Transverse colon (tissue), 4 donors: ENCODE measurements at regions of chr2 and their contacts with region 1.

Region 1: DNA sequence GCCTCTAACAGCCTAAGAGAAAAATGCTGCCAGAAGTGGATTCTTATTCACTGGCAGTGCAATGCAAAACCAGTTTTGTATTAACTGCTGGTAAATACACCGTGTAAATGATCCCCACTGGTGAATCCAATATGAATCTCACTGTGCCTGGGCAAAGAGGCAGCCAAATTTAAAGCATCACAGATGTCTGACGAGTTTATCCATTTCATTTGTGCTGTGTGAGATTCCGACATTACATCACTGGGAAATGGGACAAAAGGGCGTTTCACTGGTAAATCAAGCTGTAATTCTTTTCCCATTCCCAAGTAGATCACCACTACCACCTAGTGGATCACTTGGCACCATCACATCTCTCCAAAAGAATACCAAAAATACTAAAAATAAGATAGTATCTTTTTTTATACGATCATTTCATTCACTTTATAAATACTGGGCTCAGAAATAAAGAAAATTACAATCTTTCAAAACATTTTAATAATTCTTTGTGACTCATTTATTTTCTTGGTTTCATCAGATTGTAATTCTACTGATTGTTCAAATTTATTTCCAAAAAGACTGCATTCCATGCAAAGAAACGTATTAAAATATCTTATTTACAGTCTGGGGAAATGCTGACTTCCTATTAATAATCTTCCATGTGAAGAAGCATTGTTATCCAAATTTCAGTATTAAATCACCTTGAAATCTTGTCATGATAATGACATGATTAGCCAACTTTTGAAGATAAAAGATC is 125.6 kb downstream of the GRB14 start:
- DNase-seq: no peak
- H3K4me3 ChIP-seq: no peak overlapping the region
- H3K27ac ChIP-seq: no peak overlapping the region
- H3K4me1 ChIP-seq: peaks cover 0 to 3% (median 0%) of the 10 kb centered on the region in 4 donors
- H3K27me3 ChIP-seq: no peaks in the 10 kb centered on the region
- CTCF ChIP-seq: peak; percentile 29 to 48 (median 37)
- EP300 ChIP-seq: no peak
- POLR2A ChIP-seq: no peak

Region 2: DNA sequence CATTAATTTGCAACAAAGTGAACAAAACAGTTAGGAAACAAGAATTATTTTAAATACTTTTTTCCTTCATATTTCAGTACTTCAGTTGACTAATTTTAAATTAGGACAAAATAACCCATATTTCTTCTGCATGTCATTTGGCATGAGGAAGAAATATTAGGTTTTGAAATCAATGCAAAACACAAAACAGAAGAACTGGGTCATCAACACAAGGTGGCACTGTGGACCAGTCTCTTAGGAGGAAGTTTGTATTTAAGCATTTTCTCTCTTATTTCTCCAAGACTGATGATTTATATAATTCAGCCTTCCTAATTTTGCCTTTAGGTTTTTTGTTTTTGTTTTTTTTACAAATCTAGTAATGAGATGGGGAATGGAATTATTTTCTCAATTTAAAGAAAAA is 1304.3 kb before region 1 on chr2:
- in situ Hi-C with region 1: loop called (anchors 25 kb)
- intact Hi-C with region 1: no loop called
- DNase-seq: no peak
- H3K4me3 ChIP-seq: no peak overlapping the region
- H3K27ac ChIP-seq: no peak overlapping the region
- H3K4me1 ChIP-seq: no peaks in the 10 kb centered on the region
- H3K27me3 ChIP-seq: no peaks in the 10 kb centered on the region
- CTCF ChIP-seq: peak in 4 of 5 experiments; percentile 23 to 40 (median 32)
- EP300 ChIP-seq: no peak
- POLR2A ChIP-seq: no peak

Region 3: DNA sequence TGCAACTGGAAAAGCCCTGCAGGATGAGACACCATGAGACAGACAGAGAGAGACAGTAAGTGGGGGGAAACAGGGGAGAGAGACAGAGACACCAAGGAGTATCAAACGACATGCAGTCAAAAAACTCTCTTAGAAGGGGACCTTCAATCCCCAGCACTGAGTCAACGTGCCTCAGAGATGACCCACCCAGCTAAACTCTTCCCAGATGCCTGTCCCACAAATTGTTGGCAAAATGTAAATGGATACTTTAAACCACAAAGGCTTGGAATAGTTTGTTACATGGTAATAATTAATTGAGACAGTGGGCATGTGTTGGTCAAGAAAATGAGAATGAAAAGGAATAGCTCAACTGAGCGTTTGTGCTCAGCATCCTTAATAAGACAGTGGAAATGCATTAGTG is 27.4 kb after region 1 on chr2:
- in situ Hi-C with region 1: no loop called
- intact Hi-C with region 1: no loop called
- DNase-seq: no peak
- H3K4me3 ChIP-seq: no peak overlapping the region
- H3K27ac ChIP-seq: no peak overlapping the region
- H3K4me1 ChIP-seq: no peaks in the 10 kb centered on the region
- H3K27me3 ChIP-seq: no peaks in the 10 kb centered on the region
- CTCF ChIP-seq: no peak
- EP300 ChIP-seq: no peak
- POLR2A ChIP-seq: no peak